Activated CD4-positive, alpha-beta memory T cell treated with anti-CD3 and anti-CD28 coated beads for 36 hours (primary cell): ENCODE measurements at regions of chrX and their contacts with region 1.

Region 1: GRCh38 chrX:54529552-54530357 is at the start of gene GNL3L:
- DNase-seq: peak; percentile 89
- H3K4me3 Mint-ChIP-seq: peak within 1 kb of the TSS; percentile 89
- H3K27ac Mint-ChIP-seq: peak within 1 kb of the TSS; percentile 91
- H3K4me1 Mint-ChIP-seq: peaks cover 36% of the 10 kb centered on the region
- H3K27me3 Mint-ChIP-seq: no peaks in the 10 kb centered on the region
- total RNA-seq, gene GNL3L: 45.8 to 45.9 TPM

Region 2: GRCh38 chrX:54397113-54397512 is 132.6 kb before region 1 on chrX:
- CTCF ChIA-PET with region 1: no interaction called
- POLR2A ChIA-PET with region 1: no interaction called
- intact Hi-C with region 1: no loop called
- DNase-seq: no peak
- H3K4me3 Mint-ChIP-seq: no peak overlapping the region
- H3K27ac Mint-ChIP-seq: no peak overlapping the region
- H3K4me1 Mint-ChIP-seq: no peaks in the 10 kb centered on the region
- H3K27me3 Mint-ChIP-seq: peaks cover under 1% of the 10 kb centered on the region

Region 3: DNA sequence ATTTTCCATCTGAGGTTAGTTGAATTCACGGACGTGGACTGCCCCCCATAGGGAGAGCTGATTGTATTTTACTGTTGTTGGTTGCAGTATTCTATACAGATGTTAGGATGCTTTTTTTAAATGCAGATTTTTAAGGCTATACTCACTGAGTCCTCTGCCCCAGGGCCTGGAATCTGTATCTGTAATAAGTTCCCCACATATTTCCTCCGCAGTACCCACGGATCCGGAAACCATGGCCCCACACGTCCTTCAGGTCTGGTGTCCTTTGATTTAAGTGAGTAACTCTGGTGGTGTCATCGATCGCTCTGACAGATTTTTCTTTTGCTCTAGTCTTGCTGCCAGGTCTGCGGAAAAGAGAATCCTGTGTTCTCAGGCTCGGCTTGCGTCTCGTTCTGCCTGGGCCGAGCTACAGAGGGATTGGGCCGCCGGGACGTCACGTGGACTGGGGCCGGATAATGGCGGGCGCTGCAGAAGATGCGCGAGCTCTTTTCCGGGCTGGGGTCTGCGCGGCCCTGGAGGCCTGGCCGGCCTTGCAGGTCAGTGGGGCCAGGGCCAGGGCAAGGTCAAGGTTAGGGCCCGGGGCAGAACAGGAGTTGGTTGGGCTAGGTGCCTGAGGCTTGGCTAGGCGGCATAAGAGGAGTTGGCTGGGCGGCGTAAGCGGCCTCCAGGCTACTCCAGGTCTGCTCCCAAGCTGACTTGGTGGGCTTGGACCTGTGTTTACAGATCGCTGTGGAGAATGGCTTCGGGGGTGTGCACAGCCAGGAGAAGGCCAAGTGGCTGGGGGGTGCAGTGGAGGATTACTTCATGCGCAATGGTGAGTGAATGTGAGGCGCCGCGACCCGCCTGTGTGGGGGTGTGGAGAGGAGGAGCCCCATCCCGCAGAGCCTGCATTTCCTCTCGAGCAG is 89.5 kb before region 1 on chrX and contains the start of gene TSR2:
- CTCF ChIA-PET with region 1: no interaction called
- POLR2A ChIA-PET with region 1: interaction called, 3 read pairs
- intact Hi-C with region 1: loop called (anchors 1 kb)
- DNase-seq: peak; percentile 88
- H3K4me3 Mint-ChIP-seq: peak within 1 kb of the TSS; percentile 90
- H3K27ac Mint-ChIP-seq: peak within 1 kb of the TSS; percentile 78
- H3K4me1 Mint-ChIP-seq: peaks cover 26% of the 10 kb centered on the region
- H3K27me3 Mint-ChIP-seq: no peaks in the 10 kb centered on the region
- total RNA-seq, gene TSR2: 24.1 to 25.4 TPM

Region 4: GRCh38 chrX:54808605-54809483 is 279.1 kb after region 1 on chrX:
- CTCF ChIA-PET with region 1: no interaction called
- POLR2A ChIA-PET with region 1: no interaction called
- intact Hi-C with region 1: loop called (anchors 2 kb)
- DNase-seq: peak; percentile 94
- H3K4me3 Mint-ChIP-seq: peak overlapping the region; percentile 90
- H3K27ac Mint-ChIP-seq: peak overlapping the region; percentile 90
- H3K4me1 Mint-ChIP-seq: peaks cover 13% of the 10 kb centered on the region
- H3K27me3 Mint-ChIP-seq: peaks cover 2% of the 10 kb centered on the region